Right ventricle myocardium superior (tissue), 1 donor: ENCODE measurements at regions of chr14 and their contacts with region 1.

Region 1: GRCh38 chr14:61719344-61720293 is 24.3 kb downstream of the HIF1A start:
- DNase-seq: no peak
- ATAC-seq: no peak

Region 2: GRCh38 chr14:60926002-60926401 is 793.6 kb before region 1 on chr14:
- intact Hi-C with region 1: no loop called
- DNase-seq: no peak
- ATAC-seq: no peak

Region 3: DNA sequence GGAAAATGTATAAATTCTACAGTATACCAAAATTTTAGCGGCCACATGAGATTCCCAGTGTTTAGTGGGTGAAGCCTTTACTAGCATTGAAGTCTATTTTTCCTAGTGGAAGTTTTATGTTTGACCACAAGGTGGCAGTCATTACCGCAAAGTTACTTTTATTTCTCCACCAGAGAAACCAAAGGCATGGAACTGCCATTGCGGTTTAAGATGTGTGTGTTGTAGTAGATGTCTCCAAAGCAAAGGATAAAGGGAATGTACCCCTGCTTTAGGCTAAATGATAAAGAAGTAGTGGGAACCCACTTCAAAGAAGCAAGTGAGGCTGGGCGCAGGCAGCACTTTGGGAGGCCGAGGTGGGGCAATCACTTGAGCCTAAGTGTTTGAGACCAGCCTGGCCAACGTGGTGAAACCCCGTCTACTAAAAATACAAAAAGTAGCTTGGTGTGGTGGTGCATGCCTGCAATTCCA is 257.8 kb before region 1 on chr14:
- intact Hi-C with region 1: loop called (anchors 10 kb)
- DNase-seq: no peak
- ATAC-seq: peak; percentile 52

Region 4: GRCh38 chr14:61690982-61691381 is 28.6 kb before region 1 on chr14:
- intact Hi-C with region 1: no loop called
- DNase-seq: no peak
- ATAC-seq: no peak

Region 5: GRCh38 chr14:62084020-62084419 is 364.4 kb after region 1 on chr14:
- intact Hi-C with region 1: no loop called
- DNase-seq: no peak
- ATAC-seq: no peak

Region 6: DNA sequence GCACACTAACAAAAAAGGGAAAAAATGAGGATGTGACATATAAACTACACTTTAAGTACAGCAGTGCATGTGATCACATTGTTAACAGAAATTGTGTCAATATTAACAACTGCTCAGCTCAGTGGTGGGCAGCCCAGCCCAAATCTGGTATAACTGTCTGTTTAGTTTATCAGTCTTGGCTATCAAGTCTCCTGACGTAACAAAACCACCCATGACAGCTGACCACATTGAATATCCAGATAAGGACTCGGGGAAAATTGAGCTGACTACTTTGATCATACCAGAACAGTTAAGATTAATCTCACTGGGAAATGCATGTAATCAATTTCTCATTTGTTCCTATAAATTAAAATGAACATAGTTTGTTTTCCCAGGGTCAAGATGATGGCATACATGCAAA is 439.2 kb after region 1 on chr14:
- intact Hi-C with region 1: no loop called
- DNase-seq: no peak
- ATAC-seq: no peak